ENCODE measurements at regions of chr5 and their contacts with region 1.

Region 1: GRCh38 chr5:19904766-19905165 is 83.2 kb downstream of the CDH18 start:
- DNase-seq: no peak
- H3K4me3 ChIP-seq: no peak overlapping the region
- H3K27ac ChIP-seq: no peak overlapping the region
- H3K4me1 ChIP-seq: no peaks in the 10 kb centered on the region
- H3K27me3 ChIP-seq: no peaks in the 10 kb centered on the region
- CTCF ChIP-seq: no peak
- POLR2A ChIP-seq: no peak

Region 2: GRCh38 chr5:19739671-19740070 is 165.1 kb before region 1 on chr5:
- intact Hi-C with region 1: no loop called
- DNase-seq: no peak
- H3K4me3 ChIP-seq: no peak overlapping the region
- H3K27ac ChIP-seq: no peak overlapping the region
- H3K4me1 ChIP-seq: no peaks in the 10 kb centered on the region
- H3K27me3 ChIP-seq: no peaks in the 10 kb centered on the region
- CTCF ChIP-seq: no peak
- POLR2A ChIP-seq: no peak

Region 3: GRCh38 chr5:19853616-19854240 is 51.0 kb before region 1 on chr5:
- intact Hi-C with region 1: no loop called
- DNase-seq: no peak
- H3K4me3 ChIP-seq: no peak overlapping the region
- H3K27ac ChIP-seq: no peak overlapping the region
- H3K4me1 ChIP-seq: no peaks in the 10 kb centered on the region
- H3K27me3 ChIP-seq: no peaks in the 10 kb centered on the region
- CTCF ChIP-seq: no peak
- POLR2A ChIP-seq: no peak

Region 4: GRCh38 chr5:20572614-20573013 is 667.8 kb after region 1 on chr5:
- intact Hi-C with region 1: loop called (anchors 5 kb)
- DNase-seq: no peak
- H3K4me3 ChIP-seq: no peak overlapping the region
- H3K27ac ChIP-seq: no peak overlapping the region
- H3K4me1 ChIP-seq: no peaks in the 10 kb centered on the region
- H3K27me3 ChIP-seq: no peaks in the 10 kb centered on the region
- CTCF ChIP-seq: no peak
- POLR2A ChIP-seq: no peak

Measured in prostate gland (tissue), 2 donors.